ENCODE measurements at regions of chr12 and their contacts with region 1.

Region 1: DNA sequence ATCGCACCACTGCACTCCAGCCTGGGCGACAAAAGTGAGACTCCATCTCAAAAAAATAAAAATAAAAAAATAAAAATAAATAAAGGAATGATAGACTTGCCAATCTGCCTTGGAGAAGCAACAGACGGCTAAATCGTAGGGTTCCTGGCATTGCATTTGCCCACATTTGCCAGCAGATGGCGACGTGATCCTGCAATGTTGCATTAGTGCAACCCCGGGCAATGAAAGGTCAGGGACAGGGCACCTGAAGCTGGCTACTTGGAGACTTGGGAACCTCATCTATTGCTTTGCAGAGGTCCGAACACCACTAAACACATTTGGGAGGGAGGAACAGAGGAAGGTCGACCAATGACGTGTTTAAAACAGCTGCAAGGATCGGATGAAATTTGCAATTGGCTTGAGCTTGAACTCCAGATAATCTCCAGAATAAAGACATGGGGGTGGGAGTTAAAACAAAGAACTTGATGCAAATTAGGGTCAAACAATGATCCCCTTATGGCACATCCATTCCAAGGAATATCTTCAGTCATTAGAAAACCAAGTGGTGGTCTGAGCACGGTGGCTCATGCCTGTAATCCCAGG is 34.6 kb downstream of the SPRING1 start:
- DNase-seq: peak; percentile 75
- ATAC-seq: peak; percentile 92

Region 2: GRCh38 chr12:116880817-116881324 is 177.6 kb after region 1 on chr12:
- intact Hi-C with region 1: loop called (anchors 5 kb)
- DNase-seq: peak; percentile 44
- ATAC-seq: peak; percentile 92

Measured in Right ventricle myocardium superior (tissue), 1 donor.